ENCODE measurements at regions of chr10 and their contacts with region 1.

Region 1: DNA sequence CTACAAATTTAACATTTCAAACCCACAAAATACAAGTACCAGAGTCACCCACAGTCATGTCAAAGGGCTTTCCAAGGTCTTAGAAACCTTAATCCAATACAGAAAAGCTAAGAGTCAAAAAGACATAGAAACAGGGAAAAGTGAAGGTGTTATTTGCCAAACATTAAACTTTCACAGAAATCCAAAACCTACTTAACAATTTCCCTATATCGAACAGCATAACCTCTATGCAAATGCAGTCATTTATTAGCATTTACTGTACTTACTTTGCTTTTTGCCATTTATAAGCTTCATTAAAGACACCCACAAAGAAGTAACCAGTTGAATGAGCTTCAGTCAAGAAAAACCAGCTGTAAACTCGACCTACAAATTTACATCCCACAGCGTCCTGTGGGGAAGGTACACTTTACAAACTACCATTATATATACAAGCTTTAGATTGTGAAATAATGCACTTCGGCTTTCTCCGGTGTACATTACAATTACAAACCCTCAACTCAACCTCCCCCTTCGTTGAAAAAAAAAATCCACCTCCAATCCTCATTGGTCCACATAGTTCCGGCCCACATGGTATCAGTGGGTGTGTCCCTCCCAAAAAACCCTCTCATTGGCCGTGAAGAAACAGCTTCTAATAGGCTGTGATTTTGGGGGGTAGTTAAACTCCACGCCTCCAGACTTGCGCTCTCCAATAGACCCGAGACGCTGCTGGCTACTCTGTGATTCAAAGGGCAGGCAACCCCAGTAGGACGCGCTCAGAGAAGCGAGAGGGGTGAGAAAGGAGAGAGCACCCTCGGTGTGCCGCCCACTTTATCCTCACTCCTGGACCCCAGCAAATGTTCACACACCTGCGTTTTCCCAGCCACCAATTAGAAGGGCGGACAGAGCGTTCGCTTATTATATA is 1.4 kb downstream of the PANK1 start:
- H3K4me3 ChIP-seq: peak overlapping the region; percentile 85
- H3K27ac ChIP-seq: peak overlapping the region; percentile 97
- H3K4me1 ChIP-seq: peaks cover 9% of the 10 kb centered on the region; the same call in 1 of the 2 replicates
- CTCF ChIP-seq: no peak

Region 2: DNA sequence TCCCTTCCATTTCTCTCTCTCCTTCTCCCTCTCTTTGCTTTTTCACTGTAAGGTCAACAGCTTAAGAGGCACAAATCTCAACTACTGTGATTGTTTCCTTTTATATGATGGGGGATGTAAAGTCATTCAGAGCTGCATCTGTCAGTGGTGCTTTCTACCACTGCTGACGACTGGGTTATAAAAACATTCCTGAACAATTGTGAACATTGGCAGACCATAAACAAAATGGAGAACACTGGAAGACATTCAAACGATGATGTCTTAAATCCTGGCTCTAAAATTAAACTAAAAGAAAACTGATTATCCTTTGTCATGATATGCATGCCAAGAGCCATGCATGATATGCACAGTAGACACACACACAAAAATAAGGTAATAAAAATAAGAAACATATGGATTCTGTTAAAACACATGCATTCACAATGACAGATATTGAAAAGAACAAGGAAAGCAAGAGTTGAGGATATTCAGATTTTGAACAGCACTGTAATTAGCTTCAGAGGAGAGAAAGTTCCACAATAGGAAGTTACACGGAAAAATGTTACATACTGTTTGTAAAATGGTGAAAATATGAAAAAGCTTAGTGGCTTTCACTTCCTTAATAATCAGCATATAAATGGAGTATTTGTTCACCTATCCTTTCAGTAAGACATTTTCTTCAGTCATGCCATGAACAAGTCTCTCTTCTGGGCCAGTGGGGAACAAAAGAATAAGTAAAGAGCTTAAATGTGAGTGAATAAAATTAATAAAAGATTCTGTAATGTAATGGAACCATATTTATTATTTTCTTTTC is 1149.8 kb before region 1 on chr10:
- CTCF ChIA-PET with region 1: no interaction called
- POLR2A ChIA-PET with region 1: no interaction called
- H3K4me3 ChIP-seq: no peak overlapping the region
- H3K27ac ChIP-seq: no peak overlapping the region
- H3K4me1 ChIP-seq: 0 out of 2 replicates have a peak, but pooled peaks cover 2% of the 10 kb centered on the region
- CTCF ChIP-seq: no peak

Region 3: GRCh38 chr10:89633484-89633883 is 10.2 kb before region 1 on chr10:
- CTCF ChIA-PET with region 1: interaction called, 5 read pairs
- POLR2A ChIA-PET with region 1: interaction called, 11 read pairs
- H3K4me3 ChIP-seq: no peak overlapping the region
- H3K27ac ChIP-seq: no peak overlapping the region
- H3K4me1 ChIP-seq: peaks cover 23% of the 10 kb centered on the region
- CTCF ChIP-seq: no peak

Region 4: GRCh38 chr10:89701238-89702120 is 57.8 kb after region 1 on chr10 and contains the start of gene KIF20B:
- CTCF ChIA-PET with region 1: no interaction called
- POLR2A ChIA-PET with region 1: interaction called, 61 read pairs
- H3K4me3 ChIP-seq: peak within 1 kb of the TSS; percentile 61
- H3K27ac ChIP-seq: peak within 1 kb of the TSS; percentile 88
- H3K4me1 ChIP-seq: peaks cover 18% of the 10 kb centered on the region
- CTCF ChIP-seq: peak; percentile 40